ENCODE measurements at regions of chr14 and their contacts with region 1.

Region 1: GRCh38 chr14:76647697-76648298 is 113.5 kb upstream of the VASH1 start:
- DNase-seq: peak; percentile 75
- H3K4me3 Mint-ChIP-seq: no peak overlapping the region
- H3K27ac Mint-ChIP-seq: no peak overlapping the region
- H3K4me1 Mint-ChIP-seq: no peaks in the 10 kb centered on the region
- H3K27me3 Mint-ChIP-seq: no peaks in the 10 kb centered on the region
- CTCF ChIP-seq: peak; percentile 70

Region 2: DNA sequence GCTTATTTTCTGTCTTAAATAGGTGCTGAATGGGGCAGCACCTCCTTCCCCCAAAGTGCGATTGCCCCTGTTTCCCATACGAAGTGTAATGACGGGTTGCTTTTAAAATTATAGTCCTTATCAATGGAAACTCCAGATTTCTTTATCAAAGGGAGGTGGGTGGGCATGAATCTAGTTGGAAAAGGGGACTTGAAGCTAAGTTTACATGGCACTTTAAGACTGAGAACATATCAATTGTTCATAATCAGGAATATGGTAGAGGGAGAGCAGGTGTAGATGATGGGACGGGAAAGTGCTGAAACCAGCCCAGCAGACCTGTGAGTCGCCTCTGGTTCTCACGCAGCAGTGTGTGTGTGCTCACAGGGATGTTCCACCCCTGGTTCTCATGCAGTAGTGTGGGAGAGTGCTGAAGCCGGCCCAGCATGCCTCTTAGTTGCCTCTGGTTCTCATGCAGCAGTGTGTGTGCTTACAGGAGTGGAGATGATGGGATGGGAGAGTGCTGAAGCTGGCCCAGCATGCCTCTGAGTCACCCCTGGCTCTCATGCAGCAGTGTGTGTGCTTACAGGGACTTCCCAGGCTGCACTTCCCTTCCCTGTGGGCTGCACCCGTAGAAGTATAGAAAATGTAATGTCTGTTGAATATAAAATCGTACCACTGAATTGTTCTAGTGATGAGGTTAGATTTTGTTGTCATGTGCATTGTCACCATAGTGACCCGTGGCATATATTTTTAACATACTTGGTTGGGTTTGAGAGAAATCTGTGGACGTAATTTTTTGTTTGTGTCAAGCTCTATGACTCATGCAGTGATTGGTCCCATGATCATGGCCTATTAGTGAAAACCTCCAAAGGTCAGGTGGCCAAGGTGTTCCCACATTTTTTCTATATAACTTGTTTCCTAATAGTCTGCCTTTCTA is 444.5 kb before region 1 on chr14:
- CTCF ChIA-PET with region 1: interaction called, 6 read pairs
- POLR2A ChIA-PET with region 1: no interaction called
- intact Hi-C with region 1: loop called (anchors 10 kb)
- DNase-seq: peak; percentile 89
- H3K4me3 Mint-ChIP-seq: peak overlapping the region; percentile 53
- H3K27ac Mint-ChIP-seq: peak overlapping the region; percentile 91
- H3K4me1 Mint-ChIP-seq: peaks cover 29% of the 10 kb centered on the region
- H3K27me3 Mint-ChIP-seq: no peaks in the 10 kb centered on the region
- CTCF ChIP-seq: no peak

Region 3: GRCh38 chr14:76456200-76456599 is 191.6 kb before region 1 on chr14:
- CTCF ChIA-PET with region 1: interaction called, 4 read pairs
- POLR2A ChIA-PET with region 1: no interaction called
- intact Hi-C with region 1: loop called (anchors 2 kb)
- DNase-seq: peak; percentile 62
- H3K4me3 Mint-ChIP-seq: no peak overlapping the region
- H3K27ac Mint-ChIP-seq: no peak overlapping the region
- H3K4me1 Mint-ChIP-seq: no peaks in the 10 kb centered on the region
- H3K27me3 Mint-ChIP-seq: no peaks in the 10 kb centered on the region
- CTCF ChIP-seq: peak; percentile 40

Region 4: DNA sequence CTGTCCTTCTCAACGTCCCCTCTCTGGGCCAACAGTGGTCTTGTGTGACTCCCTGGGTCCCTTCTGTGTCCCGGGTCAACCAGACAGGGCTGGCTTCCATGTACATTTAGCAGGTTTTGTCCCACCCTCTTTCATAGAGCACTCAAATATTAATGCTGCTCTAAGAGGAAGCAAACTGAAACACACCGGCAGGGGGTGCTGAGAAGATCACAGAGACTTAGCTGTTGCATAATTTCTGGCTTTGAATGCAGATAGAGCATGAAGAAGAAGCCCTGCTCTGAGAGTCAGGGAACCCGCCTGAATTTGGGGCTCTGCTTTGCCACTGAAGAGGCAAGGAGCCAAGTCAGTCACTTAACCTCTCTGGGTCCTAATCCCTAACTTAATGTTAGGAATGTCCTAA is 133.2 kb before region 1 on chr14:
- CTCF ChIA-PET with region 1: interaction called, 70 read pairs
- POLR2A ChIA-PET with region 1: no interaction called
- intact Hi-C with region 1: loop called (anchors 1 kb)
- DNase-seq: peak; percentile 72
- H3K4me3 Mint-ChIP-seq: no peak overlapping the region
- H3K27ac Mint-ChIP-seq: no peak overlapping the region
- H3K4me1 Mint-ChIP-seq: peaks cover 9% of the 10 kb centered on the region
- H3K27me3 Mint-ChIP-seq: peaks cover 23% of the 10 kb centered on the region
- CTCF ChIP-seq: peak; percentile 58

Region 5: GRCh38 chr14:76687611-76688382 is 40.0 kb after region 1 on chr14:
- CTCF ChIA-PET with region 1: interaction called, 10 read pairs
- POLR2A ChIA-PET with region 1: no interaction called
- intact Hi-C with region 1: no loop called
- DNase-seq: no peak
- H3K4me3 Mint-ChIP-seq: no peak overlapping the region
- H3K27ac Mint-ChIP-seq: no peak overlapping the region
- H3K4me1 Mint-ChIP-seq: no peaks in the 10 kb centered on the region
- H3K27me3 Mint-ChIP-seq: peaks cover 11% of the 10 kb centered on the region
- CTCF ChIP-seq: no peak